ENCODE measurements at regions of chr1 and their contacts with region 1.

Region 1: GRCh38 chr1:28208818-28209441 is 23.9 kb downstream of the DNAJC8 start:
- DNase-seq: peak; percentile 84
- H3K4me3 Mint-ChIP-seq: no peak overlapping the region
- H3K27ac Mint-ChIP-seq: no peak overlapping the region
- H3K4me1 Mint-ChIP-seq: peaks cover 11% of the 10 kb centered on the region
- H3K27me3 Mint-ChIP-seq: no peaks in the 10 kb centered on the region

Region 2: DNA sequence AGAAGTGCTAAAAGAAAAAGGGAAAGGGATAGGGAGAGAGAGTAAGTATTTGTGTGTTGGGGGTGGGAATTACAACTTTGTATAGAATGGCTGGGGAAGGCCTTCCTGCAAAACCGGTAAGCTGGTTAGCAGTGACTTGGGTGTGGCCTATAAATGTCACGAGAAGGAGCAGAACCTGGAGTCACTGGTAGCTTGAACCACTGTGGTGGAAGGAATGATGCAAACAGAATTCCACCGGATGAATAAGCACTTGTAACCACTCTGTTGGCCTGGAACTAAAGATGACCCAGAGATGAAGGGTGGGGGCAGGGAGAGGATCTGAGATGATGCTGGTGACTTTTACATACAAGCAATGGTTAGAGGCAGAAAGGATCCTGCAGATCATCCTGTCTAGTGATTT is 240.2 kb before region 1 on chr1:
- CTCF ChIA-PET with region 1: no interaction called
- DNase-seq: no peak
- H3K4me3 Mint-ChIP-seq: no peak overlapping the region
- H3K27ac Mint-ChIP-seq: no peak overlapping the region
- H3K4me1 Mint-ChIP-seq: peaks cover 19% of the 10 kb centered on the region
- H3K27me3 Mint-ChIP-seq: no peaks in the 10 kb centered on the region

Region 3: GRCh38 chr1:28170005-28170596 is 38.8 kb before region 1 on chr1:
- CTCF ChIA-PET with region 1: interaction called, 12 read pairs
- DNase-seq: no peak
- H3K4me3 Mint-ChIP-seq: no peak overlapping the region
- H3K27ac Mint-ChIP-seq: no peak overlapping the region
- H3K4me1 Mint-ChIP-seq: peaks cover 57% of the 10 kb centered on the region
- H3K27me3 Mint-ChIP-seq: peaks cover 71% of the 10 kb centered on the region

Region 4: DNA sequence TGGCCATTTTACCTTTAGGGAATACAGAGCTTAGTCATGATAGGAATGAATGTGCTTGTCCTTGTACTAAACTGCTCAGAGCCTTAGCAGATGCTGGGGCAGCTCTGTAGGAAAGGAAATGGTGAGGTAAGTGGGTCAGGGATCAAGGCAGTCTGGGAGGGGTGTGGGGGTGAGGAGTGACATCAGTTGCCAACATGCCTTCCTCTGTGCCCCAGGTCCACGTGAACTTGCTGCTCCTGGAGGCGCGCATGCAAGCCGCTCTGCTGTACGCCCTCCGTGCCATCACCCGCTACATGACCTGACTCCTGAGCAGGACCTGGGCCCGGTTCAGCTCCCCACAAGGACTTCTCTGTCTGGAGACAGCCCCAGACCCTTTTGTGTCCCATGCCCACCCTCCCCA is 71.6 kb after region 1 on chr1:
- CTCF ChIA-PET with region 1: no interaction called
- DNase-seq: no peak
- H3K4me3 Mint-ChIP-seq: no peak overlapping the region
- H3K27ac Mint-ChIP-seq: no peak overlapping the region
- H3K4me1 Mint-ChIP-seq: peaks cover 17% of the 10 kb centered on the region
- H3K27me3 Mint-ChIP-seq: peaks cover 2% of the 10 kb centered on the region

Region 5: GRCh38 chr1:28296401-28297261 is 87.7 kb after region 1 on chr1:
- CTCF ChIA-PET with region 1: no interaction called
- DNase-seq: no peak
- H3K4me3 Mint-ChIP-seq: no peak overlapping the region
- H3K27ac Mint-ChIP-seq: no peak overlapping the region
- H3K4me1 Mint-ChIP-seq: peaks cover 7% of the 10 kb centered on the region
- H3K27me3 Mint-ChIP-seq: peaks cover 27% of the 10 kb centered on the region

Region 6: DNA sequence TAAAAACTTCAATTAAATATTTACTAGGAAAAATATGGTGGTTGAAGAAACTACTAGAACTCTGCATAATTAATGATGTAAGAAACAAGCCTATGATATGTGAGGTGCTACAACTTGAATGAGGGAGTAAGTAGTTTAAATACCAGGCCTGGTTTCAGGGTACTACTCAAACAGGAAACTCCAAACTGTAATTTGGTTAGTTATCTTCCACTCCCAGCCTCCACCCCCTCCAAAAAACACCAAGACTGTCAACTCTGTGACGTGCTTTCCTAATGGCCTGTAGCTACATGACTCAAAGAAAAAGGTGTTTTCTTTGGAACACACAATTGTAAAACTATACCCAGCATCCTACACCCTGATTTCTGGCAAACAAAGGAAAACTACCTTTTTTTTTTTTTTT is 241.0 kb after region 1 on chr1:
- CTCF ChIA-PET with region 1: no interaction called
- DNase-seq: peak; percentile 71
- H3K4me3 Mint-ChIP-seq: no peak overlapping the region
- H3K27ac Mint-ChIP-seq: peak overlapping the region; percentile 91
- H3K4me1 Mint-ChIP-seq: peaks cover 33% of the 10 kb centered on the region
- H3K27me3 Mint-ChIP-seq: no peaks in the 10 kb centered on the region

Measured in activated naive CD4-positive, alpha-beta T cell treated with anti-CD3 and anti-CD28 coated beads, Interleukin-2, amount 10 ng/mL, durations not matched to agents 7 days and 5 days (primary cell).